ENCODE measurements at regions of chr1 and their contacts with region 1.

Region 1: DNA sequence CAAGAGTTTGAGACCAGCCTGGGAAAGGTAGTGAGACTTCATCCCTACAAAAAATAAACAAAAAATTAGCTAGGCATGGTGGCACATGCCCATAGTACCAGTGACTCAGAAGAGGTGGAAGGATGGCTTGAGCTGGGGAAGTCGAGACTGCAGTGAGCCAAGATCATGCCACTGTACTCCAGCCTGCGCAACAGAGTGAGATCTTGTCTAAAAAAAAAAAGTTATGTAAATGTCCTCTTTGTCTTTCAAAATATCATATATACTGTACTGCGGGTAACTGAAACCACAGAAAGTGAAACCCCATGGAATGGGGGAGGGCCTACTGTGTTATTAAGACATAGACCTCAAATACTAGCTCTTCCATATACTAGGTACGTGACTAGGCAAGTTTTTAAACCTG is 20.8 kb downstream of the ACADM start:
- DNase-seq: peak in 3 of 14 experiments; percentile 14 to 25 (median 17)
- ATAC-seq: no peak
- H3K4me3 ChIP-seq: no peak overlapping the region
- H3K4me3 Mint-ChIP-seq: no peak overlapping the region
- H3K27ac ChIP-seq: no peak overlapping the region
- H3K27ac Mint-ChIP-seq: no peak overlapping the region
- H3K4me1 ChIP-seq: no peaks in the 10 kb centered on the region
- H3K4me1 Mint-ChIP-seq: no peaks in the 10 kb centered on the region
- H3K27me3 ChIP-seq: no peaks in the 10 kb centered on the region
- H3K27me3 Mint-ChIP-seq: no peaks in the 10 kb centered on the region
- CTCF ChIP-seq: no peak

Region 2: GRCh38 chr1:75529488-75529887 is 215.8 kb before region 1 on chr1:
- CTCF ChIA-PET with region 1: no interaction called
- POLR2A ChIA-PET with region 1: no interaction called
- intact Hi-C with region 1: no loop called
- DNase-seq: no peak
- ATAC-seq: no peak
- H3K4me3 ChIP-seq: no peak overlapping the region
- H3K4me3 Mint-ChIP-seq: no peak overlapping the region
- H3K27ac ChIP-seq: no peak overlapping the region
- H3K27ac Mint-ChIP-seq: no peak overlapping the region
- H3K4me1 ChIP-seq: no peaks in the 10 kb centered on the region
- H3K4me1 Mint-ChIP-seq: no peaks in the 10 kb centered on the region
- H3K27me3 ChIP-seq: no peaks in the 10 kb centered on the region
- H3K27me3 Mint-ChIP-seq: no peaks in the 10 kb centered on the region
- CTCF ChIP-seq: no peak

Region 3: DNA sequence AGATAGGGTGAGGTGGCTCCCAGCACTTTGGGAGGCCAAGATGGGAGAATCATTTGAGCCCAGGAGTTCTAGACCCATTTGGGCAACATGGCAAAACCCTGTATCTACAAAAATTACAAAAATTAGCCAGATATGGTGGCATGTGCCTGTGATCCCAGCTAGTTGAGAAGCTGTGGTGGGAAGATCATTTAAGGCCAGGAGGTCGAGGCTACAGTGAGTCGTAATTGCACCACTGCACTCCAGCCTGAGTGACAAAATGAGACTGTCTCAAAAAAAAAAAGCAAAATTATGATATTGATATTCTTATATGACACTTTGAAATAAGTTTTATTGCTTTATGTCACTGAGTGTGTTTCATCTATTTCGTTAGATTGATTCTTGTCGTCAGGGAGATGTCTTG is 13.4 kb before region 1 on chr1:
- CTCF ChIA-PET with region 1: interaction called, 3 read pairs
- POLR2A ChIA-PET with region 1: no interaction called
- intact Hi-C with region 1: loop called in 1 of 2 experiments (anchors 1 kb)
- DNase-seq: no peak
- ATAC-seq: no peak
- H3K4me3 ChIP-seq: no peak overlapping the region
- H3K4me3 Mint-ChIP-seq: no peak overlapping the region
- H3K27ac ChIP-seq: no peak overlapping the region
- H3K27ac Mint-ChIP-seq: no peak overlapping the region
- H3K4me1 ChIP-seq: peaks cover under 1% of the 10 kb centered on the region
- H3K4me1 Mint-ChIP-seq: peaks cover 19% of the 10 kb centered on the region
- H3K27me3 ChIP-seq: no peaks in the 10 kb centered on the region
- H3K27me3 Mint-ChIP-seq: no peaks in the 10 kb centered on the region
- CTCF ChIP-seq: no peak

Region 4: DNA sequence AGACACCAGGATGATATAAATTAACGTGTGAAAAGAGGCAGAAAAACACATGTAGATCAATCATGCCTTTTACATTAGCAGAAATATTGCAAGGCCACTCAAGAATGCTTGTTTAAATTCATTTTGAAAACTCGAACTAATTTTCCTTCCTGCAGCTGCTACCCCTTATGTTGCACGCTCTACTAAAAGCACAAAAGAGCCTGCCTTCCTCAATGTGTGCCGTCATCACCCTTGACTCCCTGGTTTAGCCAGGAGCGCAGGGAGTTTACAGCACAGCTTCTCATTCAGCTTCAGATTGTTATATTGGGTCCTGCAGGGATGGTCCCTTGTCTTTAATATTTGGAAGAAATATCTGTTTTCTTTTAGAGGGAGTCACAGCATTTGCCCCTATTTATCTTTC is 1111.9 kb after region 1 on chr1:
- CTCF ChIA-PET with region 1: no interaction called
- POLR2A ChIA-PET with region 1: no interaction called
- intact Hi-C with region 1: no loop called
- DNase-seq: no peak
- ATAC-seq: no peak
- H3K4me3 ChIP-seq: no peak overlapping the region
- H3K4me3 Mint-ChIP-seq: no peak overlapping the region
- H3K27ac ChIP-seq: no peak overlapping the region
- H3K27ac Mint-ChIP-seq: no peak overlapping the region
- H3K4me1 ChIP-seq: no peaks in the 10 kb centered on the region
- H3K4me1 Mint-ChIP-seq: no peaks in the 10 kb centered on the region
- H3K27me3 ChIP-seq: no peaks in the 10 kb centered on the region
- H3K27me3 Mint-ChIP-seq: peaks cover 16% of the 10 kb centered on the region
- CTCF ChIP-seq: no peak

Measured in CD4-positive, alpha-beta T cell (primary cell).